Dendritic cell treated with granulocyte-macrophage colony-stimulating factor and Interleukin-4, amounts not matched to agents 40 ng/mL and 50 ng/mL, for 4 days (primary cell): ENCODE measurements at regions of chr3 and their contacts with region 1.

Region 1: DNA sequence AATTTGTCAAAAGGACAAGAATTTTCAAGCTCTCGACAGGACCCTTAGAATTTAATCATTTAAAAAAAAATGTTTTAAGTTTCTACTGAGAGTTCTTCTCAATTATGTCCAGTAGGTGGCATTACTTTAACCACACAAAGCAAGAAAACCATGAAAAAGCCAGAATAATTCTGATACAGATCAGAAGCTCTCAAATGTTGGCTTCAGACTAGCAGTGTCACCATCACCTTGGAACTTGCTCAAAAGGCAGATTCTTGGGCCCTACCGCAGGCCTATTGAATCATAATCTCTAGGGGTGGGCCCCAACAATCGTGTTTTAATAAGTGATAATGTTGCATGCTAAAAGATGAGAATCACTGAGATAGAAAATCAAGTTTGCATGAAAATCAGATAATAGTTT is 99.5 kb upstream of the KCNMB2 start:
- H3K4me3 Mint-ChIP-seq: no peak overlapping the region
- H3K27ac Mint-ChIP-seq: no peak overlapping the region
- H3K4me1 Mint-ChIP-seq: no peaks in the 10 kb centered on the region
- H3K27me3 Mint-ChIP-seq: peaks cover 1% of the 10 kb centered on the region

Region 2: DNA sequence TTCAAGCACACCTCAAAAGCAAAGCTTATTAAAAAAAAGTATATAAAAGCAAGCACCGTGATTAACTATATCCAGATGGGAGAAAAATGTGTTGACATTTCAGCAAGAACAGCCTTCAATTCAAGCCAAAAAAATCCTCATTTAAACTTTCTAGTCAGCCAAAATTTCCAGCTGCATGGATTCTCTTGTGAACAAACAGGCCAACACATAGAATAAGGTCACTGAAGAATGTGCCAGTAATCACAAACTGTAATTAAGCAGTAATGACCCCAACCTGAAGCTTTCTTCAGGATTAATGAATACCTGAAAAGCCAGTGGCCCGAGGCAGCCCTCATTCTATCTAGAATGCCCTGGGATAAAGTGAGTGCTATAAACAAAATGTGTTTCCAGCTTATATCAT is 31.2 kb before region 1 on chr3:
- intact Hi-C with region 1: no loop called
- H3K4me3 Mint-ChIP-seq: no peak overlapping the region
- H3K27ac Mint-ChIP-seq: no peak overlapping the region
- H3K4me1 Mint-ChIP-seq: no peaks in the 10 kb centered on the region
- H3K27me3 Mint-ChIP-seq: no peaks in the 10 kb centered on the region

Region 3: GRCh38 chr3:178966299-178967176 is 529.8 kb after region 1 on chr3:
- intact Hi-C with region 1: loop called (anchors 10 kb)
- H3K4me3 Mint-ChIP-seq: no peak overlapping the region
- H3K27ac Mint-ChIP-seq: no peak overlapping the region
- H3K4me1 Mint-ChIP-seq: peaks cover 6% of the 10 kb centered on the region
- H3K27me3 Mint-ChIP-seq: peaks cover 1% of the 10 kb centered on the region

Region 4: DNA sequence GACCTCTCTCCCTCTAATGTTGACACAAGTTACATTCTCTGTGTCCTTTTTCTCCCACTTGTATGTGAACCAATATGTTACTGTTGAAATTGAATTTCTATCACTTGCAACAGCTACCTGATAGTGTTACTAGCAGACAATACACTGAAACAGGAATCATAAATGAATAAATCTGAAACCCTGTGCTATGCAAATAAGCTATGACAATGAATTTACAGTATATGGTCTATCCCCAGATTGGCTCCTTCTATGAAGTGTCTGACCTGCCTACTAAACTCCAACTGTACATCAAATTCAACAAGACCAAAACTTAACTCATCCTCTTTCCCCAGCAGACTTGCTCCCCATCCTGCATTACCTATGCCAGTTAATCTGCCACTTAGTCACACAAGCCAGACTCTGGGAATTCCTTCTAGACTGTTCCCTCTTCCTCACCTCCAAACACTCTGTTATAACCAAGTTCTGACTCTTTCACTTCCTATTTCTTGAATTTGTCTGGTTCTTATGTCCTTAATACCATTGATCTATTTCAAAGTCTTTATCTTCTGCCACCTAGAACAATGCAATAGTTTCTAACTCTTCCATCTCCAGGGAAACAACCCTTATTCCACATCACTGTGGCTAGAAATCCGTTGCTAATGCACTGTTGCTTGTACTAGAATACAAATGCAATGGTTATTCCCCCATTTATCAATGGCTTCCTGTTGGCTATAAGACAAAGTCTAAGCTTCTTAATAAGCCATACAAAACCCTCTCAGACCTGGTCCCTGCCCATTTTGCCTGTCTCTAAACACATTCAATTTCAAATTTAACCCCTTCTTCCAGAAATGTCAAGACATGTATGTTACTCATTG is 872.7 kb after region 1 on chr3:
- intact Hi-C with region 1: loop called (anchors 10 kb)
- H3K4me3 Mint-ChIP-seq: no peak overlapping the region
- H3K27ac Mint-ChIP-seq: no peak overlapping the region
- H3K4me1 Mint-ChIP-seq: no peaks in the 10 kb centered on the region
- H3K27me3 Mint-ChIP-seq: peaks cover 1% of the 10 kb centered on the region